Activated T-helper 1 cell treated with anti-CD3 and anti-CD28 coated beads, Interleukin-12 subunit alpha, Interleukin-12 subunit beta, Interleukin-2, Interleukin-4 antibody, amounts not matched to agents 30 ng/mL and 10 ng/mL and 1 ng/mL, durations not matched to agents 14 hours and 24 hours and 36 hours (primary cell): ENCODE measurements at regions of chr5 and their contacts with region 1.

Region 1: DNA sequence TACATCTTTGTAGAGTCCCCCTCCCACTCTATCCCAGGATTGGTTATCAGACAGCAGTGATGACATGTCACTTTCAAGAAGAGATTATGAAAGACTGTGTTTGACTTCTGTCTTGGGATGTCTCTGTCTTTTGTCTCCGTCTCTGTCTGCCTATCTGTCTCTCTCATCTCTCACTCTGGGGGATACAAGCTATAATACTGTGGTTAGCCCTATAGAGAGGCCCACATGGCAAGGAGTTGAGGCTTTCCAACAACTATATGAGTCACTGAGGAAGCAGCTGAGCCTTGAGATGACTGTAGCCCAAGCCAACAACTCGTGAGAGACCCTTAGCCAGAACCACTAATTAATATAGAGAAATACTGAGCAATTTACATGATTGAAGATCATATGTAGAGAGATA is 284.8 kb downstream of the PDE4D start:
- DNase-seq: no peak
- H3K4me3 Mint-ChIP-seq: peak overlapping the region; percentile 41
- H3K27ac Mint-ChIP-seq: peak overlapping the region; percentile 77
- H3K4me1 Mint-ChIP-seq: peaks cover 43% of the 10 kb centered on the region
- H3K27me3 Mint-ChIP-seq: no peaks in the 10 kb centered on the region

Region 2: GRCh38 chr5:59238126-59238902 is 370.4 kb before region 1 on chr5:
- intact Hi-C with region 1: loop called (anchors 1 kb)
- DNase-seq: no peak
- H3K4me3 Mint-ChIP-seq: no peak overlapping the region
- H3K27ac Mint-ChIP-seq: no peak overlapping the region
- H3K4me1 Mint-ChIP-seq: peaks cover 18% of the 10 kb centered on the region
- H3K27me3 Mint-ChIP-seq: peaks cover 61% of the 10 kb centered on the region

Region 3: GRCh38 chr5:59542851-59543820 is 65.6 kb before region 1 on chr5:
- intact Hi-C with region 1: no loop called
- DNase-seq: no peak
- H3K4me3 Mint-ChIP-seq: no peak overlapping the region
- H3K27ac Mint-ChIP-seq: no peak overlapping the region
- H3K4me1 Mint-ChIP-seq: no peaks in the 10 kb centered on the region
- H3K27me3 Mint-ChIP-seq: peaks cover 17% of the 10 kb centered on the region

Region 4: DNA sequence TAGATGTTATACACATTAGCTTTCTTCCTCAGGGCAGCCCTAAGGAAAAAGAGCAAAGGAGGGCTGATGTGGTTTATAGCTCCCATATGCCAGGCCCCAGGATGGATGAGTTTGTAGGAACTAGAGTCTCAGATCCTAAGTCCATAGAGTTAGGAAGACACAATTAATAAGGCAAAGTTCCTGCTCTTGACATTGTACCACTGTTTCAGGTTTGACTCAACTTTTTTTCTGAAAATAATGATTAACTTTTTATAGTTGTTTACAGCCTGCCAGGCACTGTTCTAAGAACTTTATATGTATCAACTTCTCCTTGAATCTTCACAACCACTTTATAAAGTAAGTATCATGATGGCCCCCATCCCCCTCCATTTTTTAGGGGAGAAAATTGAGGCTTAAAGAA is 54.8 kb before region 1 on chr5:
- intact Hi-C with region 1: no loop called
- DNase-seq: no peak
- H3K4me3 Mint-ChIP-seq: no peak overlapping the region
- H3K27ac Mint-ChIP-seq: no peak overlapping the region
- H3K4me1 Mint-ChIP-seq: no peaks in the 10 kb centered on the region
- H3K27me3 Mint-ChIP-seq: peaks cover 8% of the 10 kb centered on the region

Region 5: GRCh38 chr5:59656351-59657254 is 47.9 kb after region 1 on chr5:
- intact Hi-C with region 1: loop called (anchors 2 kb)
- DNase-seq: no peak
- H3K4me3 Mint-ChIP-seq: no peak overlapping the region
- H3K27ac Mint-ChIP-seq: no peak overlapping the region
- H3K4me1 Mint-ChIP-seq: peaks cover 32% of the 10 kb centered on the region
- H3K27me3 Mint-ChIP-seq: peaks cover 2% of the 10 kb centered on the region